Calu3 (cell line): ENCODE measurements at regions of chr1 and their contacts with region 1.

Region 1: DNA sequence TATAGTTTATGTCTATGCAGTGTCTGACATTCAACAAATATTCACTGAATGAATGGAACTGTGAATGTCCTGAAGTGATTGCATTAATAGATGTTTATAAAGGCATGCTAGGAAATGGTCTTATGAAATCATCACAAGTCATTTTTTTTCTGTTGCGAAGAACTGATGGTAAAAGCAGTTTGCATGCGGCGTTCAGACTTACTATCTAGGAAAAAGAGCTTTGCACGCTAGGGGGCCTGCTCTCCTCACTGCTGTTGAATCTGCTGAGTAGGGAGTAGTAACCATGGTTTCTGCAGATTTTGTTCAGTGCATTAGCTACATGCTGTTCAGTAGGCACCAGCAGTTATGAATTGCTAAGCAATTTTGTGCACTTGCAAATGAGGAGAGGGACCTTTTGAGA is 57.9 kb downstream of the CENPF start:
- DNase-seq: no peak
- H3K4me3 Mint-ChIP-seq: no peak overlapping the region
- H3K27ac Mint-ChIP-seq: no peak overlapping the region
- H3K4me1 Mint-ChIP-seq: no peaks in the 10 kb centered on the region
- H3K27me3 Mint-ChIP-seq: no peaks in the 10 kb centered on the region
- CTCF ChIP-seq: no peak

Region 2: DNA sequence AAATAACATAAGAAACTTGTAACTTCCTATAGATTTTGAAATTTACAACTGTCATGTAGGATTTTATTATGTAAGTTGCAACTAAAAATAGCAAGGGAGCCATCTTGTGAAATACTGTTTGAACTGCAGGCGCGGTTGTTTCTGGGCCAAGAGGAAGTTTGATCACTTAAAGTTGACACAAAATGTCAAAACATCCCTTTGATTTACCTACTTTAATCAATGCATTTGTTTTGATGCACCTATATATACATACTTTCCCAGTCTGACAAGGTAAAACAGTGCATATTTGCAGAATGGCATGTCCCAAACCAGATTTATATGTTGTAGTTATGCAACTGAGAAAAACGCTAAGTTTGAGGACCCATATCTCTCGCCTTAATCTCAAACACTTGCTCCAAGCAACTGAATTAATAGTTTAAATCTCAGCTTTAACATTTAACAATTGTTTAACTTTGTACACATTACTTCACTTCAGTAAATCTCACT is 485.5 kb after region 1 on chr1:
- CTCF ChIA-PET with region 1: no interaction called
- intact Hi-C with region 1: loop called (anchors 1 kb)
- DNase-seq: peak; percentile 40
- H3K4me3 Mint-ChIP-seq: no peak overlapping the region
- H3K27ac Mint-ChIP-seq: no peak overlapping the region
- H3K4me1 Mint-ChIP-seq: no peaks in the 10 kb centered on the region
- H3K27me3 Mint-ChIP-seq: no peaks in the 10 kb centered on the region
- CTCF ChIP-seq: peak; percentile 64

Region 3: DNA sequence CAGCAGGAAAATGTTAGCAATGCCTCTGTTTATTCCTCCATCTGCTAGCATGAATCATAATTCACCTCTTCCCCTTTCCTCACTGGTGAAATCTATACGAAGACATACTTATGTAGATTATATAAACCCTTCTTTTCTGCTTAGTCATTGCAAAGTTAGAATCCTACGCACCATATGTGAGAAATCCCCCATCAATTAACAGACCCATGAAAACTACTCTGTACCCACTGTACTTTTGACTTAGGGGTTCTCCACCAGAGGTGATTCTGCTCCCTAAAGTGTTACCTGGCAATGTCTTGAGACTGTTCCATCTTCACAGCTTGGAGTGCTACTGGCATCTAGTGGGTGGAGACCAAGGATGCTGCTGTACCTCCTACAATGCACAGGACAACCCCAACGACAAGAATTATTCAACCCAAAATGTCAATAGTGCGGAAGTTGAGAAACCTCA is 856.6 kb after region 1 on chr1:
- CTCF ChIA-PET with region 1: no interaction called
- intact Hi-C with region 1: loop called (anchors 2 kb)
- DNase-seq: peak; percentile 32
- H3K4me3 Mint-ChIP-seq: no peak overlapping the region
- H3K27ac Mint-ChIP-seq: no peak overlapping the region
- H3K4me1 Mint-ChIP-seq: peaks cover 9% of the 10 kb centered on the region
- H3K27me3 Mint-ChIP-seq: no peaks in the 10 kb centered on the region
- CTCF ChIP-seq: no peak